Uterus (tissue), 4 donors: ENCODE measurements at regions of chr1 and their contacts with region 1.

Region 1: GRCh38 chr1:156692925-156693847 is 12.2 kb downstream of the CRABP2 start:
- DNase-seq: no peak
- H3K4me3 ChIP-seq: no peak overlapping the region
- H3K27ac ChIP-seq: peak overlapping the region in 1 of 2 donors; percentile 21
- H3K4me1 ChIP-seq: no peaks in the 10 kb centered on the region
- H3K27me3 ChIP-seq: no peaks in the 10 kb centered on the region
- CTCF ChIP-seq: no peak
- POLR2A ChIP-seq: no peak

Region 2: DNA sequence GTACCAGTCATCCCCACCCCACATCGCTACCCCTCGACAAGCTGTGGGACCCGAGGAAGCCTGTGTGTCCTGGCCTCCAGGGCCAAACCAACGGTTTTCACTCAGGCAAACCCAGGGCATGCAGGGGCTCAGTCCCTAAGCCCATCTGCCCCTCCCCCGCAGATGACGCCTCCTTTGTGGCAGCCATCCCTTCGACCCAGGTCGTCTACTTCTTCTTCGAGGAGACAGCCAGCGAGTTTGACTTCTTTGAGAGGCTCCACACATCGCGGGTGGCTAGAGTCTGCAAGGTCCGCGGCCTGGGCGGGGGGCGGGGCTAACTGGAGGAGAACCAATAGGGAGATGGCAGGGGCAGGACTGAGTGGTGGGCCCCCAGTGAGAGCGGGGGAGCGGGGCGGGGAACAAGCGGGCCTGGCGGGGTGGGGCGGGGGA is 532.4 kb before region 1 on chr1:
- intact Hi-C with region 1: no loop called
- DNase-seq: peak; percentile 85 to 92
- H3K4me3 ChIP-seq: peak overlapping the region; percentile 21 to 48
- H3K27ac ChIP-seq: peak overlapping the region; percentile 83 to 86
- H3K4me1 ChIP-seq: peaks cover 0 to 4% of the 10 kb centered on the region in 2 donors
- H3K27me3 ChIP-seq: no peaks in the 10 kb centered on the region
- CTCF ChIP-seq: no peak
- POLR2A ChIP-seq: no peak

Region 3: DNA sequence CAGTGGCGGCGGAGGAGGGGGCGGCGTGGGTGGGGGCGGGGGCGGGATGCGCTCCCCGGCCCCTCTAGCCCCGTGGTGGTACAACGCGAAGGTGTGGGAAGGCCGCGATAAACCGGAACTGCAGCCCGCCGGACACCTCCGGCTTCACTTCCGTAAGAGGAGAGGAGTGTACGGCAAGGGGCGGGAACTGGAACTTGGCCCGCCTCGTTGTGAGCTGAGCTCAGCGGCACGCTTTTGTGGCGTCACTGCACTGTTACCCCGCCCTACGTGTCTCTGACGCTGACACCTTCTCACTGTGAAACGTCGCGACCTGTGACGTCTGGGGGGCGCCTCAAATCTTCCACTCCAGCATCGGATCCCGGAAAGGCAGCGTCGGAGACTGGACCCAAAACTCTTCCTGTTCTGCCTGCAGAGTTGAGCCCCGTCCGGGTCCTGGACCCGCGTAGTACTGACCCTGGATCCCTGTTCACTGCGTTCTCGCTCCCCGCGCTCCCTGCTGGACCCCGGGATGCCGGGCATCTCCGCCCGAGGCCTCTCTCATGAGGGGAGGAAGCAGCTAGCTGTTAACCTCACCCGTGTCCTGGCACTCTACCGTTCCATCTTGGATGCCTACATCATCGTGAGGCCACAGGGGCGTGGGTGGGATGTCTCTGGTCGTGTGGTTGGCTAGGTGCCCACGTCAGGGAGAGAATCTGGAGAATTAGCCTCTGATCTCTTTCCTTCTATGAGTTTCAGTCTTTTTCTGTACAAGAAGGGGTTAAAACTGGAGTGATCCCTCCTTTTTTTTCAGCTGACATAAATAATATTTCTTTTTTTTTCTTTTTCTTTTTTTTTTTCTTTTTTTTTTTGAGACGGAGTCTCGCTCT is 35.6 kb after region 1 on chr1 and contains the start of gene ISG20L2:
- intact Hi-C with region 1: loop called (anchors 2 kb)
- DNase-seq: peak; percentile 97 to 98
- H3K4me3 ChIP-seq: peak within 1 kb of the TSS; percentile 80 to 87
- H3K27ac ChIP-seq: peak within 1 kb of the TSS; percentile 96 to 99
- H3K4me1 ChIP-seq: peaks cover 15% of the 10 kb centered on the region in 2 donors
- H3K27me3 ChIP-seq: no peaks in the 10 kb centered on the region
- CTCF ChIP-seq: peak in 2 of 4 experiments; percentile 2 to 8
- POLR2A ChIP-seq: peak; percentile 52 to 65
- total RNA-seq, gene ISG20L2: 3.6 to 24.8 (median 10.2) TPM

Region 4: DNA sequence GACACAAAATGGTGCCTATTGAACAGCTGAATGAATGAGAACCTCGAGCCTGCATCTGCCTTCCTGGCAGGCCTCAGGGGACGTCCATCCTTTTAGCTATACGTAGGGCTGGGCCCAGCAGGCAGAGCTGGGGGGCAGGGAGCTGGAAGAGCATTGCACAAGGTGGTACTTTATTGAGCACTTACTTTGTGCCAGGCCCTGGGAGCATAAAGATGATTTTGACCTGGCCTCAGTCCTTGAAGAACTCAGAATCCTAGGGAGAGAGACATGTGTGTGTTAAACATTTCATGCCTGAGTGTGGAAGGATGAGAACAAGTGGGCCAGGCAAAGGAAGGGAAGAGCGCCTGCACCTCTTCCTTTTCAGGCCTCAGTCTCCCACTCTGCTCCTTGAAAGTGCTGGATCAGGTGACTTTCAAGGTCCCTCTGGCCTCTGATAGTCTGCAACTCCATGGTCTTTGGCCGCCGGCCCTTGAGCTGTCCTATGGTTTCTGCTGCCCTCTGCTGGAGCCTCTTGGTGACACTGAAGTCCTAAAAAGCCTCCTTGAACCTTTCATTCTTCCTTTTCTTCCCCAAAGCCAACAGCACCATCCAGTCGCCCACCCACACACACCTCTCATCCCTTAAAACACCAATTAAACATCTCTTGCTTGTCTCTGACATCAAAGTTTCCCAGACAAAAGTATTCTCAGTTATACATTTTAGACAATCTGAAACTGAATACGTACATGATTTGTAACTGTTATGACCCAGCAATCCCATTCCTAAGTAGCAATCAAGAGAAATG is 196.8 kb after region 1 on chr1:
- intact Hi-C with region 1: loop called (anchors 10 kb)
- DNase-seq: peak; percentile 81
- H3K4me3 ChIP-seq: no peak overlapping the region
- H3K27ac ChIP-seq: no peak overlapping the region
- H3K4me1 ChIP-seq: peaks cover 0 to 6% of the 10 kb centered on the region in 2 donors
- H3K27me3 ChIP-seq: peaks cover 0 to 4% of the 10 kb centered on the region in 2 donors
- CTCF ChIP-seq: peak; percentile 70 to 85 (median 72)
- POLR2A ChIP-seq: no peak